A549 (cell line): ENCODE measurements at regions of chr1 and their contacts with region 1.

Region 1: DNA sequence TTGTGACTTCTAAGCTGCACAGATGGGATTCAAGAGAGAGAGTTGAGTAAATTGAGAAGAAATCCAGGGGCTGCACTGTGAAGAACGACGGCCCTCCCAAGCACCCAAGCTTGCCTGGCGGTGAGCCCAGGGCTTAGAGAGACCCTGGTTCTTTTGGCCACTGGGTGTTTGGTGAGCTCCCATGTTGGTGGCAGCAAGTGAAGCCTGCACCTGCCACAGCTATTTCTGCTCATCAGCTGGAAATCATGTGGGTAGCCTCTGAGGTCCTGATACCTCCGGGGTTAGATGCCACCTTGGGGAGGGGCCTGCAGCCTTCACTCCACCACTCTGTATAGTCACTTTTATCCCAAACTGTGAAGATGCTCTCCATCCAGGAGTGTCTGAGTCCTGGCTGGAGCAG is 6.2 kb upstream of the BTG2 start:
- DNase-seq: no peak
- ATAC-seq: no peak
- H3K4me3 ChIP-seq: no peak overlapping the region
- H3K27ac ChIP-seq: no peak overlapping the region
- H3K4me1 ChIP-seq: no peaks in the 10 kb centered on the region
- CTCF ChIP-seq: no peak
- EP300 ChIP-seq: no peak
- POLR2A ChIP-seq: no peak
- RAD21 ChIP-seq: no peak

Region 2: GRCh38 chr1:203280996-203281395 is 18.2 kb before region 1 on chr1:
- CTCF ChIA-PET with region 1: interaction called, 17 read pairs
- POLR2A ChIA-PET with region 1: no interaction called
- DNase-seq: peak; percentile 28 to 60
- ATAC-seq: peak; percentile 60 to 85; a peak in 4 of 6 replicates
- H3K4me3 ChIP-seq: no peak overlapping the region
- H3K27ac ChIP-seq: no peak overlapping the region
- H3K4me1 ChIP-seq: peaks cover 8% of the 10 kb centered on the region; the same call in 2 of the 3 replicates
- CTCF ChIP-seq: no peak
- EP300 ChIP-seq: no peak
- POLR2A ChIP-seq: no peak
- RAD21 ChIP-seq: no peak